CD8-positive, alpha-beta T cell (primary cell): ENCODE measurements at regions of chr2 and their contacts with region 1.

Region 1: GRCh38 chr2:210517252-210517651 is 39.1 kb upstream of the CPS1 start:
- DNase-seq: no peak
- ATAC-seq: no peak
- H3K4me3 ChIP-seq: no peak overlapping the region
- H3K4me3 Mint-ChIP-seq: no peak overlapping the region
- H3K27ac ChIP-seq: no peak overlapping the region
- H3K27ac Mint-ChIP-seq: no peak overlapping the region
- H3K4me1 ChIP-seq: no peaks in the 10 kb centered on the region
- H3K4me1 Mint-ChIP-seq: no peaks in the 10 kb centered on the region
- H3K27me3 ChIP-seq: no peaks in the 10 kb centered on the region
- H3K27me3 Mint-ChIP-seq: peaks cover 21% of the 10 kb centered on the region
- CTCF ChIP-seq: no peak

Region 2: DNA sequence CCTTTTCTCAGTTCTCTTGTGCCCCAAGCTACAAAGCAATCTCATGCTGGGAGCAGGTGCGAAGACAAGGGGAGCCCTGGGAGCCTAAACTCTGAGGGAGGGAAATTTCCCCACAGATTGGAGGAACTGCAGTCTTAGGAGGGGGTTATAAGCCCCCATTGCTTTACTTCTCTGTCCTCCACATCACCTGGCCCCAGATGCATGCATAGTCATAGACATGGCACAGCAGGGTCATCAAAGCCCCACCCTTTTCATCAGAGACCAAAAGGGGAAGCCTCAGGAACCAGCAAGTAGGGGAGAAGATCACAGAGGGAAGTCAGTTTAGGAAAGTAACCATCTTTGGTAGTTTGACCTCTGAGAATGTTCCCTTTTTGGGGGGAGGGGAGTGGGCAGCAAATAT is 74.4 kb before region 1 on chr2:
- CTCF ChIA-PET with region 1: no interaction called
- POLR2A ChIA-PET with region 1: no interaction called
- intact Hi-C with region 1: no loop called
- DNase-seq: no peak
- ATAC-seq: no peak
- H3K4me3 ChIP-seq: no peak overlapping the region
- H3K4me3 Mint-ChIP-seq: no peak overlapping the region
- H3K27ac ChIP-seq: no peak overlapping the region
- H3K27ac Mint-ChIP-seq: no peak overlapping the region
- H3K4me1 ChIP-seq: no peaks in the 10 kb centered on the region
- H3K4me1 Mint-ChIP-seq: peaks cover 11% of the 10 kb centered on the region
- H3K27me3 ChIP-seq: no peaks in the 10 kb centered on the region
- H3K27me3 Mint-ChIP-seq: no peaks in the 10 kb centered on the region
- CTCF ChIP-seq: no peak

Region 3: DNA sequence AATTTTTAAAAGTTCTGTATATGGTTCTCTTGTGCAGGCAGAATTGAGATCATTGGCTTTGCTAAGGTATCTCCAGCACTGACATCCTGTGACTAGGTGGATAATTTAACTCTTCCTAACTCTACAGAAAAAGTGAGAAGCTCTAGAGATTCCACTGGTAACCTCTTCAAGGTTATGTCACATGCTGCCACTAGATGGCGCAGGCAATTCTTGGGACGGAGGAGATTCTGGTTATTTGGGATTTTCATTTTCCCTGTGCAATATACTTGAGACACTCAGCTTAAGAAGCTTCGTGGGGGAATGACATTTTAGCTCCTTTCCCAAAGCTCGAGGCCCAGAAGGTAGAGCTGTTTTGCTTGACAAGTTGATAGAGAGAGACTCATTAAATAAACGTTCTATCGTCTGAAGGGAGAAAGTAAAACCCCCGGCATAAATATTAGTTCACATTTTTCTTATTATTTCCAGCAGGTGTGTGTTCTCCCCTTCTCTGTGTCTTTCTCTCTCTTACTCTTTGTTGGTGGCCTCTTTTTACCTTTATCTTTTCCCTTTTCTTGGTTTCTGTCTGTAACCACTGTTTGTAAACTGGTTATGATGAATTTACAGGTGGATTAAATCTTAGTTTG is 14.1 kb before region 1 on chr2:
- CTCF ChIA-PET with region 1: interaction called, 11 read pairs
- POLR2A ChIA-PET with region 1: no interaction called
- intact Hi-C with region 1: no loop called
- DNase-seq: peak in 4 of 9 experiments; percentile 15 to 40 (median 28)
- ATAC-seq: no peak
- H3K4me3 ChIP-seq: no peak overlapping the region
- H3K4me3 Mint-ChIP-seq: peak overlapping the region; percentile 64
- H3K27ac ChIP-seq: no peak overlapping the region
- H3K27ac Mint-ChIP-seq: no peak overlapping the region
- H3K4me1 ChIP-seq: no peaks in the 10 kb centered on the region
- H3K4me1 Mint-ChIP-seq: peaks cover 8% of the 10 kb centered on the region
- H3K27me3 ChIP-seq: no peaks in the 10 kb centered on the region
- H3K27me3 Mint-ChIP-seq: peaks cover 16% of the 10 kb centered on the region
- CTCF ChIP-seq: peak; percentile 78

Region 4: DNA sequence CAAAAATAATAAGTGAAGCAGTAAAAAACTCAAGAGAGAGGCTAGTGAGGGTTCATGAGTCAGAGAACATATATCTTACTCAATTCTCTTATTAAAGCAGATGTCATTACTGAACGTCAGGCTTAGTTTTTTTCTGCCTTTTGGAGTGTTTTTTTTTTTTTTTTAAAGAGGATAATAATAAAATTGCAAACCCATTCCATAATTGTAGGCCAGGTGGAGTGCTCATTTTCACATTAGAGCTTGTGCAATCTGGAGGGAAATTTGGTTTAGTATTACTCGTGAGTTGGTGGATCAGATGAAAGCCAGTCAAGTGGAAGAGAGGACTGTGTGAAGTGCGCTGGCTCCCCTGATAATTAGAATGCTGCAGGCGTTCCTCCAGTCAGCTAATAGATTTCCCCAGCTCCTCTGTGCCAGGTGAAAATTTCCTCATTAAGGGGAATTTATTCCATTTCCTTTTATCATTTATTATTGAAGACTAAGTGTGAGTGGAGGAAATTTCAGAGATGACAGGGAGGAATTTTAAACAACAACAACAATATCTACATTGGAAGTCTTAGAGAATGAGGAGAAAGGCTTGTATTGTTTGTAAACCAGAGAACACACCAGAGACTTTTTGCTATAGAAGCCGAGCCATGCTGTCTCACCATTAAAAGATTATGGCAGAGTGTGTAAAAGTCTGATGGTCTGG is 113.8 kb after region 1 on chr2:
- CTCF ChIA-PET with region 1: no interaction called
- POLR2A ChIA-PET with region 1: no interaction called
- intact Hi-C with region 1: no loop called
- DNase-seq: no peak
- ATAC-seq: no peak
- H3K4me3 ChIP-seq: no peak overlapping the region
- H3K4me3 Mint-ChIP-seq: no peak overlapping the region
- H3K27ac ChIP-seq: no peak overlapping the region
- H3K27ac Mint-ChIP-seq: no peak overlapping the region
- H3K4me1 ChIP-seq: no peaks in the 10 kb centered on the region
- H3K4me1 Mint-ChIP-seq: no peaks in the 10 kb centered on the region
- H3K27me3 ChIP-seq: no peaks in the 10 kb centered on the region
- H3K27me3 Mint-ChIP-seq: peaks cover 3% of the 10 kb centered on the region
- CTCF ChIP-seq: no peak